Activated CD4-positive, alpha-beta T cell treated with anti-CD3 and anti-CD28 coated beads, Interleukin-2, amount 10 ng/mL, durations not matched to agents 24 days and 14 days (primary cell): ENCODE measurements at regions of chr1 and their contacts with region 1.

Region 1: GRCh38 chr1:19596714-19597495 is 47.2 kb upstream of the NBL1 start:
- DNase-seq: peak; percentile 99
- H3K4me3 Mint-ChIP-seq: peak overlapping the region; percentile 99
- H3K27ac Mint-ChIP-seq: peak overlapping the region; percentile 100
- H3K4me1 Mint-ChIP-seq: peaks cover 38% of the 10 kb centered on the region
- H3K27me3 Mint-ChIP-seq: peaks cover 6% of the 10 kb centered on the region

Region 2: DNA sequence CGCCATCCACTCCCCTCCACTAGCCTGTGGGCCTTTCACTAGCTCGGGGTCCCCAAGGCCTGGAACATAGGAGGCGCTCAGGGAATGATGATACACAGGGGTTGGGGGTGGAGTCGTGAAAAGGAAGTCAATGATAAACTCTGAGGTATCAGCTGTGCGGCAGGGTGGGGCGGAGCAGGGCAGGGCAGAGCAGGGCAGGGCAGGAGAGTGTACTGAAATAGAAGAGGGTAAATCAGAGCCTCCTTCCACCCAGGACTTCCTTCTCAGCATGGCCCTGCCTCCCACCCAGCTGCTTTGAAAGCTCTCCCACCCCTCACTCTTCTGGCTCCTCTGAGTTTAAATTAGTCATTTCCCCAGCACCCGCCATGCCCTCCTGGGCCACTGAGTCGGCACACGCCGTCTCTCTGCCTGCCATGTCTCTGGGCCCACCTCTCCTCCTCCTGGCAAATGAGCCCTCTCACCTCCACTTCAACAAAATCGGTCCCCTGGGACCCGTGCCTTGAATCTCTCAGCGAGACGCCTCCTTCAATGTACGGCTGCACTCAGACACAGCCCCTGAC is 128.4 kb before region 1 on chr1:
- intact Hi-C with region 1: loop called (anchors 5 kb)
- DNase-seq: peak; percentile 90
- H3K4me3 Mint-ChIP-seq: peak overlapping the region; percentile 78
- H3K27ac Mint-ChIP-seq: peak overlapping the region; percentile 92
- H3K4me1 Mint-ChIP-seq: peaks cover 82% of the 10 kb centered on the region
- H3K27me3 Mint-ChIP-seq: no peaks in the 10 kb centered on the region

Region 3: GRCh38 chr1:19643602-19644394 is 46.9 kb after region 1 on chr1 and contains the start of gene NBL1:
- intact Hi-C with region 1: loop called (anchors 2 kb)
- DNase-seq: peak; percentile 94
- H3K4me3 Mint-ChIP-seq: peak within 1 kb of the TSS; percentile 98
- H3K27ac Mint-ChIP-seq: peak within 1 kb of the TSS; percentile 88
- H3K4me1 Mint-ChIP-seq: peaks cover 28% of the 10 kb centered on the region
- H3K27me3 Mint-ChIP-seq: peaks cover 19% of the 10 kb centered on the region
- total RNA-seq, gene NBL1: 51.7 and 54.1 TPM in 2 replicates